ENCODE measurements at regions of chrX and their contacts with region 1.

Region 1: GRCh38 chrX:110407910-110408545 is 49.4 kb downstream of the RTL9 start:
- DNase-seq: peak; percentile 55 to 82 (median 60)
- ATAC-seq: peak; percentile 76
- H3K4me3 ChIP-seq: no peak overlapping the region
- H3K27ac ChIP-seq: no peak overlapping the region; the same call in 2 of the 3 replicates
- H3K4me1 ChIP-seq: peaks cover 34 to 64% of the 10 kb centered on the region in 2 experiments; a peak in 4 of 5 replicates
- H3K27me3 ChIP-seq: no peaks in the 10 kb centered on the region
- CTCF ChIP-seq: peak; percentile 69 to 87 (median 75)
- EP300 ChIP-seq: no peak
- POLR2A ChIP-seq: no peak
- RAD21 ChIP-seq: peak; percentile 80 to 89

Region 2: GRCh38 chrX:109720947-109721346 is 687.1 kb before region 1 on chrX:
- CTCF ChIA-PET with region 1: no interaction called
- POLR2A ChIA-PET with region 1: no interaction called
- in situ Hi-C with region 1: loop called (anchors 10 kb)
- intact Hi-C with region 1: no loop called
- DNase-seq: no peak
- ATAC-seq: no peak
- H3K4me3 ChIP-seq: no peak overlapping the region
- H3K27ac ChIP-seq: no peak overlapping the region
- H3K4me1 ChIP-seq: no peaks in the 10 kb centered on the region
- H3K27me3 ChIP-seq: no peaks in the 10 kb centered on the region
- CTCF ChIP-seq: no peak
- EP300 ChIP-seq: no peak
- POLR2A ChIP-seq: no peak
- RAD21 ChIP-seq: no peak

Region 3: DNA sequence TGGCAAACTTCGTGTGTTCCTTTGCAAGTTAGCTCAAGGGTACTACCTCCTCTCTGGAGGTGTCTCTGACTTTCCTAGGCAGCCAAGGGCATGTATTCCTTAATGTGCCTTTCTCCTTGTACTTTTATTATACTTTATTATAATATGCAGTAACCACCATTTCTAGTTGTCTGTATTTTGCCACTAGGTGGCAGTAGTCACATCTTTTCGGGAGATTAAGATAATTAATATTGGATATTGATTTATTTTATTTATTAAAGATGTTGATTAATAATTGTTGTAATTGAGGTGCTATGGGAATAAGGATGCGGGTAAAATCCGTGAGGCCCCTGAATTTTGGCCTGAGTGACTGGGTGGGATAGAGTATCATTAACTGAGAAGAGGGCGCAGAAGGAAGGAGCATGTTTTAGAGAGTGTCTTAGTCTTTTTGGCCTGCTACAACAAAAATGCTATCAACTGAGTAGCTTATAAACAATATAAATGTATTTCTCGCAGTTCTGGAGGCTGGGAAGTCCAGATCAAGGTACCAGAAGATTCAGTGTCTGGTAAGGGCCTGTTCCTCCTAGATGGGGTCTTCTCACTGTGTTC is 251.8 kb before region 1 on chrX:
- CTCF ChIA-PET with region 1: interaction called, 39 read pairs
- POLR2A ChIA-PET with region 1: interaction called, 8 read pairs
- in situ Hi-C with region 1: loop called (anchors 5 kb)
- intact Hi-C with region 1: loop called (anchors 1 kb)
- DNase-seq: peak in 1 of 4 experiments; percentile 23
- ATAC-seq: no peak
- H3K4me3 ChIP-seq: no peak overlapping the region
- H3K27ac ChIP-seq: no peak overlapping the region
- H3K4me1 ChIP-seq: peaks cover 7 to 30% of the 10 kb centered on the region in 2 experiments; a peak in 3 of 5 replicates
- H3K27me3 ChIP-seq: no peaks in the 10 kb centered on the region
- CTCF ChIP-seq: peak in 2 of 3 experiments; percentile 28 to 56; a peak in 4 of 6 replicates
- EP300 ChIP-seq: no peak
- POLR2A ChIP-seq: no peak
- RAD21 ChIP-seq: peak; percentile 13 to 21; a peak in 1 of 4 replicates

Region 4: GRCh38 chrX:110167952-110168451 is 240.0 kb before region 1 on chrX:
- CTCF ChIA-PET with region 1: interaction called, 3 read pairs
- POLR2A ChIA-PET with region 1: interaction called, 4 read pairs
- in situ Hi-C with region 1: loop called (anchors 5 kb)
- intact Hi-C with region 1: no loop called
- DNase-seq: peak; percentile 74 to 77 (median 75)
- ATAC-seq: peak; percentile 94
- H3K4me3 ChIP-seq: no peak overlapping the region
- H3K27ac ChIP-seq: no peak overlapping the region; the same call in 2 of the 3 replicates
- H3K4me1 ChIP-seq: peaks cover 7 to 16% of the 10 kb centered on the region in 2 experiments; a peak in 4 of 5 replicates
- H3K27me3 ChIP-seq: no peaks in the 10 kb centered on the region
- CTCF ChIP-seq: peak; percentile 62 to 84 (median 69)
- EP300 ChIP-seq: no peak
- POLR2A ChIP-seq: no peak
- RAD21 ChIP-seq: peak; percentile 36 to 63

Region 5: DNA sequence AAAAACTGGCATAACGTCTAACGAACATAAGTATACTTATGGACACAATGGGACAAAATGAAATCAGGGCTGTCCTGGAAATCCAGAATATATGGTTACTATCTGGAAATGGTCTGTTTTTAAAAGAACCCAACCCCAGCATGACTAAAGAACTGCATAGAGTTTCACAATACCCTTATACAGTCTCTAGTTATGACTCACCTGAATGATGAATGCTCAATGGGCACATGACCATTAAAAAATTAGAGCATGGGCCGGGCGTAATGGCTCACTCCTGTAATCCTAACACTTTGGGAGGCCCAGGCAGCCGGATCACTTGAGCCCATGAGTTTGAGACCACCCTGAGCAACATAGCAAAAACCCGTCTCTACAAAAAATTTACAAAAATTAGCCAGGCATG is 121.9 kb before region 1 on chrX:
- CTCF ChIA-PET with region 1: no interaction called
- POLR2A ChIA-PET with region 1: no interaction called
- in situ Hi-C with region 1: no loop called
- intact Hi-C with region 1: no loop called
- DNase-seq: no peak
- ATAC-seq: no peak
- H3K4me3 ChIP-seq: no peak overlapping the region
- H3K27ac ChIP-seq: no peak overlapping the region
- H3K4me1 ChIP-seq: peaks cover 0 to 8% of the 10 kb centered on the region in 2 experiments; a peak in 2 of 5 replicates
- H3K27me3 ChIP-seq: no peaks in the 10 kb centered on the region
- CTCF ChIP-seq: no peak
- EP300 ChIP-seq: no peak
- POLR2A ChIP-seq: no peak
- RAD21 ChIP-seq: no peak

Region 6: DNA sequence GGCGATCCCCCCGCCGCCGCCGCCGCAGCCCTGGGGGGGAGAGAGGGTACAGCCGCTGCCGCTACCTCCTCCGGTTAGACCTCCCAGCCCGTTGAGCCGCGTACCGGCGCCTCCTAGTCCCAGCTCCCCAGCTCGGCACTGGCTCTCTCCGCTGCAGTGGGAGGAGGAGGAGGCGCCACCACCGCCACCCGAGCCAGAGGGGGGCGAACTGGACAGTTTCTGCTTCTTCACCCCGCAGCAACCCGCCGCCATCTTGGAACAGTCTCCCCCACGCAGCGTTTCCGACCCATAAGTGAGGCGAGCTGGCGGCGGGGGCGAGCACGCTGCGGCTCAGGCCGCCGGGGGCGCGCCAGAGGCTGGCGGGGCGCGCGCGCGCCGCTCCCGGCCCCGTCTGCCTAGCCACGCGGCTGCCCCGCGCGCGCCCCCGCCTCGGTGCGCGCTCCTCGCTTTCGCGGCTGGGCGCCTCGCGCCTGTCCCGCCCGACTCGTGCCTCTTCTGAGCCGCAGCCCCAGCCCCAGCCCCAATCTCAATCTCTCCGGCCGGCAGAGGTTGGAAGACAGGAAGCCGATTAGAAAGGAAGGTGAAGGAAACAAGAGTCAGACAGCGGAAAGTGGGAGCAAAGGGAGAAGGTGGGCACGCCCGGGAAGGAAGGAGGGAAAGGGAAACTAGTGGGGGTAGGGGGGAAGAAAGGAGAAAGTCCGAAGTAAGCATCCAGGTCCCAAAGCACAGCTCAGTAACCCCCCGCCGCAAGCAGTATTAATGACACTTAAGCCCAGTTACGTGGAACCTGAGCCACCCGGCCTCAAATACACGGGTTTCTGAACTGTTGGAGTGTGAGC is 90.0 kb before region 1 on chrX and contains the start of gene AMMECR1:
- CTCF ChIA-PET with region 1: no interaction called
- POLR2A ChIA-PET with region 1: interaction called, 4 read pairs
- in situ Hi-C with region 1: loop called (anchors 10 kb)
- intact Hi-C with region 1: loop called (anchors 2 kb)
- DNase-seq: peak; percentile 86 to 91 (median 88)
- ATAC-seq: peak; percentile 75
- H3K4me3 ChIP-seq: peak within 1 kb of the TSS; percentile 95
- H3K27ac ChIP-seq: peak within 1 kb of the TSS; percentile 91
- H3K4me1 ChIP-seq: peaks cover 3 to 30% of the 10 kb centered on the region in 2 experiments; a peak in 2 of 5 replicates
- H3K27me3 ChIP-seq: no peaks in the 10 kb centered on the region
- CTCF ChIP-seq: peak in 1 of 3 experiments; percentile 18; a peak in 2 of 6 replicates
- EP300 ChIP-seq: no peak
- POLR2A ChIP-seq: peak; percentile 85
- RAD21 ChIP-seq: no peak
- polyA plus RNA-seq, gene AMMECR1: 13.9 to 16.1 TPM

Region 7: GRCh38 chrX:110346681-110347080 is 61.3 kb before region 1 on chrX:
- CTCF ChIA-PET with region 1: no interaction called
- POLR2A ChIA-PET with region 1: no interaction called
- in situ Hi-C with region 1: no loop called
- intact Hi-C with region 1: loop called (anchors 1 kb)
- DNase-seq: peak in 2 of 4 experiments; percentile 18 to 73
- ATAC-seq: peak; percentile 94
- H3K4me3 ChIP-seq: 0 out of 2 replicates have a peak overlapping the region, but pooled peaks have one; percentile 9
- H3K27ac ChIP-seq: no peak overlapping the region; the same call in 2 of the 3 replicates
- H3K4me1 ChIP-seq: peaks cover 0 to 3% of the 10 kb centered on the region in 2 experiments; a peak in 3 of 5 replicates
- H3K27me3 ChIP-seq: no peaks in the 10 kb centered on the region
- CTCF ChIP-seq: peak; percentile 39 to 51 (median 49); a peak in 4 of 6 replicates
- EP300 ChIP-seq: no peak
- POLR2A ChIP-seq: no peak
- RAD21 ChIP-seq: peak in 1 of 2 experiments; percentile 71; a peak in 2 of 4 replicates

Measured in K562 (cell line).